ENCODE measurements at regions of chr1 and their contacts with region 1.

Region 1: DNA sequence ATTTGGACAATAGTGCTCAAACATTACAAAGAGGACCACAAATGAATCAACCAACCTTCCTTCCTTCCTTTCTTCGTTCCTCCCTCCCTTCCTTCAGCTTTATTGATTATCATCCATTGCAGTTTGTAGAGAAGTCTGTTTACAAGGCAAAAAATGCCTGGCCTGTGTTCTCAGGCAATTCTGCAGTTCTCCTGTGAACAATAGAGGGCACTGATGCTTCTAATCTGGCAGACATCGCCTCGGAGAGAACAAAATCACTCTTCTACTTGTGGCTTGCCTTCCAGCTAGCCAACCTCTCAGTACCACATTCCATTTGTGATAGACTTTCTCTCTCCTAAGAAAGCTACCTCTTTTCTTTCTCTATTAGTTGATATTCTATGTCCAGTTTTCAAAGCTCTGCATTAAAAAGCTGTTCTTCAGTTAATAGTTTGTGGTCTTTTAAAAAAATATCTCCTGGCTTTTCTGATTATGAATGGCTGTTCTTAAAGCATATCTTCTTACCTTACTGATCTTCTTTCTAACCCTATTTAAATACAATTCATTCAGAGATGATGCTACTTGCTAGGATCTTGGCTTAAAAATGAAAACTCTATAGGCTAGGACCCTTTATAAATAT is 26.9 kb upstream of the ESRRG start:
- DNase-seq: peak; percentile 30
- ATAC-seq: peak; percentile 97
- H3K4me3 Mint-ChIP-seq: no peak overlapping the region
- H3K27ac Mint-ChIP-seq: no peak overlapping the region
- H3K4me1 Mint-ChIP-seq: peaks cover 8% of the 10 kb centered on the region
- H3K27me3 Mint-ChIP-seq: no peaks in the 10 kb centered on the region
- CTCF ChIP-seq: 0 out of 2 replicates have a peak, but pooled peaks have one; percentile 26

Region 2: GRCh38 chr1:216739793-216740192 is 10.3 kb before region 1 on chr1:
- CTCF ChIA-PET with region 1: interaction called, 12 read pairs
- POLR2A ChIA-PET with region 1: no interaction called
- DNase-seq: no peak
- ATAC-seq: peak; percentile 89
- H3K4me3 Mint-ChIP-seq: peak overlapping the region; percentile 43
- H3K27ac Mint-ChIP-seq: peak overlapping the region; percentile 57
- H3K4me1 Mint-ChIP-seq: peaks cover 47% of the 10 kb centered on the region
- H3K27me3 Mint-ChIP-seq: peaks cover 6% of the 10 kb centered on the region; the same call in 1 of the 2 replicates
- CTCF ChIP-seq: no peak

Measured in WTC11 (cell line).